ENCODE measurements at regions of chr2 and their contacts with region 1.

Region 1: GRCh38 chr2:200963124-200963917 is at the start of gene ORC2:
- DNase-seq: peak; percentile 97
- ATAC-seq: peak; percentile 92
- H3K4me3 ChIP-seq: peak within 1 kb of the TSS; percentile 77 to 97 (median 90)
- H3K4me3 Mint-ChIP-seq: peak within 1 kb of the TSS; percentile 92
- H3K27ac ChIP-seq: peak within 1 kb of the TSS; percentile 90 to 92
- H3K27ac Mint-ChIP-seq: peak within 1 kb of the TSS; percentile 98
- H3K4me1 ChIP-seq: peaks cover 28 to 30% of the 10 kb centered on the region in 2 donors
- H3K4me1 Mint-ChIP-seq: peaks cover 53% of the 10 kb centered on the region
- H3K27me3 ChIP-seq: no peaks in the 10 kb centered on the region
- H3K27me3 Mint-ChIP-seq: no peaks in the 10 kb centered on the region
- CTCF ChIP-seq: peak; percentile 77
- total RNA-seq, gene ORC2: 50.6 and 63.6 TPM in 2 replicates

Region 2: GRCh38 chr2:200713003-200713703 is 250.2 kb before region 1 on chr2:
- CTCF ChIA-PET with region 1: no interaction called
- POLR2A ChIA-PET with region 1: no interaction called
- intact Hi-C with region 1: loop called (anchors 1 kb)
- DNase-seq: peak; percentile 91
- ATAC-seq: peak; percentile 99
- H3K4me3 ChIP-seq: peak overlapping the region in 4 of 5 experiments; percentile 5 to 52 (median 16)
- H3K4me3 Mint-ChIP-seq: peak overlapping the region; percentile 83
- H3K27ac ChIP-seq: peak overlapping the region; percentile 82 to 93
- H3K27ac Mint-ChIP-seq: peak overlapping the region; percentile 98
- H3K4me1 ChIP-seq: peaks cover 5 to 6% of the 10 kb centered on the region in 2 donors
- H3K4me1 Mint-ChIP-seq: peaks cover 15% of the 10 kb centered on the region
- H3K27me3 ChIP-seq: no peaks in the 10 kb centered on the region
- H3K27me3 Mint-ChIP-seq: peaks cover 10% of the 10 kb centered on the region
- CTCF ChIP-seq: peak; percentile 83

Region 3: GRCh38 chr2:200864176-200864976 is 98.9 kb before region 1 on chr2 and contains the start of gene CLK1:
- CTCF ChIA-PET with region 1: interaction called, 8 read pairs
- POLR2A ChIA-PET with region 1: interaction called, 3 read pairs
- intact Hi-C with region 1: loop called (anchors 1 kb)
- DNase-seq: peak; percentile 97
- ATAC-seq: peak; percentile 85
- H3K4me3 ChIP-seq: peak within 1 kb of the TSS; percentile 85 to 100 (median 97)
- H3K4me3 Mint-ChIP-seq: peak within 1 kb of the TSS; percentile 93
- H3K27ac ChIP-seq: peak within 1 kb of the TSS; percentile 98 to 99
- H3K27ac Mint-ChIP-seq: peak within 1 kb of the TSS; percentile 100
- H3K4me1 ChIP-seq: peaks cover 27 to 31% of the 10 kb centered on the region in 2 donors
- H3K4me1 Mint-ChIP-seq: peaks cover 41% of the 10 kb centered on the region
- H3K27me3 ChIP-seq: no peaks in the 10 kb centered on the region
- H3K27me3 Mint-ChIP-seq: no peaks in the 10 kb centered on the region
- CTCF ChIP-seq: no peak
- total RNA-seq, gene CLK1: 396 and 409 TPM in 2 replicates

Region 4: GRCh38 chr2:200901459-200902072 is 61.8 kb before region 1 on chr2:
- CTCF ChIA-PET with region 1: interaction called, 4 read pairs
- POLR2A ChIA-PET with region 1: no interaction called
- intact Hi-C with region 1: loop called (anchors 2 kb)
- DNase-seq: peak; percentile 86
- ATAC-seq: peak; percentile 100
- H3K4me3 ChIP-seq: no peak overlapping the region
- H3K4me3 Mint-ChIP-seq: no peak overlapping the region
- H3K27ac ChIP-seq: peak overlapping the region in 1 of 2 donors; percentile 40
- H3K27ac Mint-ChIP-seq: no peak overlapping the region
- H3K4me1 ChIP-seq: no peaks in the 10 kb centered on the region
- H3K4me1 Mint-ChIP-seq: peaks cover 4% of the 10 kb centered on the region
- H3K27me3 ChIP-seq: no peaks in the 10 kb centered on the region
- H3K27me3 Mint-ChIP-seq: no peaks in the 10 kb centered on the region
- CTCF ChIP-seq: peak; percentile 94

Region 5: GRCh38 chr2:200976710-200977109 is 13.4 kb after region 1 on chr2:
- CTCF ChIA-PET with region 1: interaction called, 11 read pairs
- POLR2A ChIA-PET with region 1: no interaction called
- intact Hi-C with region 1: no loop called
- DNase-seq: no peak
- ATAC-seq: no peak
- H3K4me3 ChIP-seq: no peak overlapping the region
- H3K4me3 Mint-ChIP-seq: no peak overlapping the region
- H3K27ac ChIP-seq: no peak overlapping the region
- H3K27ac Mint-ChIP-seq: no peak overlapping the region
- H3K4me1 ChIP-seq: no peaks in the 10 kb centered on the region
- H3K4me1 Mint-ChIP-seq: no peaks in the 10 kb centered on the region
- H3K27me3 ChIP-seq: no peaks in the 10 kb centered on the region
- H3K27me3 Mint-ChIP-seq: no peaks in the 10 kb centered on the region
- CTCF ChIP-seq: no peak

Region 6: GRCh38 chr2:201057087-201057521 is 93.8 kb after region 1 on chr2:
- CTCF ChIA-PET with region 1: no interaction called
- POLR2A ChIA-PET with region 1: no interaction called
- intact Hi-C with region 1: no loop called
- DNase-seq: no peak
- ATAC-seq: no peak
- H3K4me3 ChIP-seq: no peak overlapping the region
- H3K4me3 Mint-ChIP-seq: no peak overlapping the region
- H3K27ac ChIP-seq: no peak overlapping the region
- H3K27ac Mint-ChIP-seq: no peak overlapping the region
- H3K4me1 ChIP-seq: peaks cover 0 to 4% of the 10 kb centered on the region in 2 donors
- H3K4me1 Mint-ChIP-seq: peaks cover 17% of the 10 kb centered on the region
- H3K27me3 ChIP-seq: no peaks in the 10 kb centered on the region
- H3K27me3 Mint-ChIP-seq: no peaks in the 10 kb centered on the region
- CTCF ChIP-seq: no peak

Region 7: DNA sequence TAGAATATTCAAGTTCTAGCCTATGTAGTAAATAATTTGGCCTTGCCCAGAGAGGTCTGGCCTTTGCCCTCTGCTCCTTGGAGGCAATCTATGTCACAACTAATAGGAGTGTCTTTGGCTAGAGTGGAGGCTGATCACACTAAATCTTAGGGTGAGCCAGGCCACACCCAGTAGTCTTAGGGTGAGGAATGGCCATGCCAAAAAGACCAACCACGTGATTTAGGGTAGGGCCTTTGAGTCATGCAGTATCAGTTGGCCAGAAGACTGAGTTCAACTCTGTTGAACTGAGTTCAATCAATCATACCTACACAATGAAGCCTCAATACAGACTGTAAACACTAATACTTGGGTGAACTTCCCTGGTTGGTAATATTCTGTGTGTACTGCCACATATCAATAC is 419.8 kb after region 1 on chr2:
- CTCF ChIA-PET with region 1: no interaction called
- POLR2A ChIA-PET with region 1: no interaction called
- intact Hi-C with region 1: no loop called
- DNase-seq: no peak
- ATAC-seq: no peak
- H3K4me3 ChIP-seq: no peak overlapping the region
- H3K4me3 Mint-ChIP-seq: no peak overlapping the region
- H3K27ac ChIP-seq: no peak overlapping the region
- H3K27ac Mint-ChIP-seq: no peak overlapping the region
- H3K4me1 ChIP-seq: no peaks in the 10 kb centered on the region
- H3K4me1 Mint-ChIP-seq: no peaks in the 10 kb centered on the region
- H3K27me3 ChIP-seq: no peaks in the 10 kb centered on the region
- H3K27me3 Mint-ChIP-seq: no peaks in the 10 kb centered on the region
- CTCF ChIP-seq: no peak

Region 8: DNA sequence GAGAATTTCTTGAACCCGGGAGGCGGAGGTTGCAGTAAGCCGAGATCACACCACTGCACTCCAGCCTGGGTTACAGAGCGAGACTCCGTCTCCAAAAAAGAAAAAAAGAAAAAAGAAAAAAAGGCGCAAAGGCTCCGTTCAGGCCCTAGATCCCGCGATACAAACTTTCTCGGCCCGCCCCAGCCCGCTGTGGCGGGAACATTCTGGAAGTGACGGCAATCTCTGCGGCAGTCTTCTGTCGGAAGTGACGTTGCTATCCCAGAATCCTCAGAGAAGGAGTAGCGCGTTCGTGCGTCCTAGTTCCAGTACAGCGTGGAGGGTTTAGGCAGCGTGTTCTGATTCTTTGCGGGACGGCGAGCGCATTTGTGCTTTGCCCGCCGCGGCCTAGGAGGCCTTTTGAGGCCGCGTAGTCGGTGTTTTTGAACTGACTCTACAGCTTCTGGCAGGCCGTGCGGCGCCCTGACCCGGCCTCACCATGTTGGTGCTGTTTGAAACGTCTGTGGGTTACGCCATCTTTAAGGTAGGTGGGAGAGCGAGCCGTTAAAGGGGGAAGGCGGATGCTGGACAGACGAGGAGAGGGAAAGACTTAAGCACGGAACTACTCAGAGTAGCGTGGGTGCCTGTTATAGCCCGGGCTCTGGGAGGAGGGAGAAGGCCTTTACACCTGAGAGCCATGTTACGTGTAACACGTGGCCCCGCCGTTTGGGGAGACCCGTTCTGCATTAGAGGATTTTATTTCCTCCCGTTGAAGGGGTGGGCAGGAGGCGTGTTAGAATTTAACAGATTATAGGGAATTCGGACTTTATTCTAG is 1302.4 kb after region 1 on chr2 and contains the start of gene NOP58:
- CTCF ChIA-PET with region 1: no interaction called
- POLR2A ChIA-PET with region 1: no interaction called
- intact Hi-C with region 1: loop called (anchors 5 kb)
- DNase-seq: peak; percentile 95
- ATAC-seq: peak; percentile 86
- H3K4me3 ChIP-seq: peak within 1 kb of the TSS; percentile 70 to 100 (median 97)
- H3K4me3 Mint-ChIP-seq: peak within 1 kb of the TSS; percentile 57
- H3K27ac ChIP-seq: peak within 1 kb of the TSS; percentile 81 to 93
- H3K27ac Mint-ChIP-seq: peak within 1 kb of the TSS; percentile 71
- H3K4me1 ChIP-seq: peaks cover 25 to 42% of the 10 kb centered on the region in 2 donors
- H3K4me1 Mint-ChIP-seq: peaks cover 19% of the 10 kb centered on the region
- H3K27me3 ChIP-seq: no peaks in the 10 kb centered on the region
- H3K27me3 Mint-ChIP-seq: no peaks in the 10 kb centered on the region
- CTCF ChIP-seq: no peak
- total RNA-seq, gene NOP58: 136 and 138 TPM in 2 replicates